Heart right ventricle (tissue), 16 donors: ENCODE measurements at regions of chr4 and their contacts with region 1.

Region 1: GRCh38 chr4:6986781-6987587 is 56.2 kb upstream of the TADA2B start:
- DNase-seq: peak; percentile 94 to 97
- ATAC-seq: peak; percentile 95 to 98 (median 96)
- H3K4me3 ChIP-seq: peak overlapping the region; percentile 64 to 98 (median 88)
- H3K27ac ChIP-seq: peak overlapping the region; percentile 84 to 98 (median 94)
- H3K4me1 ChIP-seq: peaks cover 13 to 85% (median 57%) of the 10 kb centered on the region in 9 donors
- H3K27me3 ChIP-seq: no peaks in the 10 kb centered on the region
- CTCF ChIP-seq: peak in 2 of 9 donors; percentile 27 to 28

Region 2: DNA sequence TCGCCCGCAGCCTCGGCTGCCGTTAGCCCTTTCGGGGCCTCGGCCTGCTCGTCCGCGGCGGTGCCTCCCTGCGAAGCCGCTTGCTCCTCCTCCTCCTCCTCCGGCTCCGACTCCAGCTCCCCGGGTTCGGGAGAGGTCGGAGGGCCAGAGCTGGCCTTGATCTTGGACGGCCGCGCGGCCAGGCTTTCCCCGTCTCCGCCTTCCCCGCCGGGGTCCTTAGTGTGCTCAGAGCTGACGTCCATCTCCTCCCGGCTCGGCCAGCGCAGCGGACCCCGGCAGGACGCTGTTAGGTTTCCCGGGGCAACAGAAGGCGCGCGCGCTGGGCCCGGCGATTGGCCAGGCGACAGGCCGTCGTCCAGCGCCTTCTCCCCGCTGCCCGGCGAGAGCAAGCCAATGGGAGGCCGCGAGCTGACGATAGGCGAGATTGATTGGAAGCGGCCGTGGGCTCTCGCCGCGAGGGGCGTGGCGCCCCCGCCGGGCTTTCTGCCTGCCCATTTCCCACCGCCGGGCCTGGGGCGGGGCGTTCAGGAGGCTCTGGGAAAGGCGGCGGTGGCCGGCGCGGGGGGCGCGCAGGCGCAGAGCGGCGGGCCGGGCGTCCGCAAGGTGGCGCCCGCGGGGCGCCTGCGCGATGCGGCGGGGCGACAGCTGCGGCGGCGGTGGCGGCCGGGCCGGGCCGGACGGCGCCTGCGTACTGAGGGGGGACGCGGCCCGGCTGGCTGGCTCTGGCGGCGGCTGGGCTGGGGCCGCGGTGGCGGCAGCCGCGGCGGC is 55.9 kb after region 1 on chr4 and contains the start of gene TADA2B:
- intact Hi-C with region 1: loop called in 4 of 10 experiments (anchors 2 to 10 kb)
- DNase-seq: peak; percentile 96 to 98
- ATAC-seq: peak; percentile 94 to 97 (median 97)
- H3K4me3 ChIP-seq: peak within 1 kb of the TSS; percentile 83 to 100 (median 99)
- H3K27ac ChIP-seq: peak within 1 kb of the TSS; percentile 86 to 96 (median 94)
- H3K4me1 ChIP-seq: peaks cover 21 to 55% (median 51%) of the 10 kb centered on the region in 9 donors
- H3K27me3 ChIP-seq: no peaks in the 10 kb centered on the region
- CTCF ChIP-seq: peak in 8 of 9 donors; percentile 28 to 57 (median 44)
- total RNA-seq, gene TADA2B: 26.2 to 40.8 (median 31.5) TPM